OCI-LY7 (cell line): ENCODE measurements at regions of chr9 and their contacts with region 1.

Region 1: DNA sequence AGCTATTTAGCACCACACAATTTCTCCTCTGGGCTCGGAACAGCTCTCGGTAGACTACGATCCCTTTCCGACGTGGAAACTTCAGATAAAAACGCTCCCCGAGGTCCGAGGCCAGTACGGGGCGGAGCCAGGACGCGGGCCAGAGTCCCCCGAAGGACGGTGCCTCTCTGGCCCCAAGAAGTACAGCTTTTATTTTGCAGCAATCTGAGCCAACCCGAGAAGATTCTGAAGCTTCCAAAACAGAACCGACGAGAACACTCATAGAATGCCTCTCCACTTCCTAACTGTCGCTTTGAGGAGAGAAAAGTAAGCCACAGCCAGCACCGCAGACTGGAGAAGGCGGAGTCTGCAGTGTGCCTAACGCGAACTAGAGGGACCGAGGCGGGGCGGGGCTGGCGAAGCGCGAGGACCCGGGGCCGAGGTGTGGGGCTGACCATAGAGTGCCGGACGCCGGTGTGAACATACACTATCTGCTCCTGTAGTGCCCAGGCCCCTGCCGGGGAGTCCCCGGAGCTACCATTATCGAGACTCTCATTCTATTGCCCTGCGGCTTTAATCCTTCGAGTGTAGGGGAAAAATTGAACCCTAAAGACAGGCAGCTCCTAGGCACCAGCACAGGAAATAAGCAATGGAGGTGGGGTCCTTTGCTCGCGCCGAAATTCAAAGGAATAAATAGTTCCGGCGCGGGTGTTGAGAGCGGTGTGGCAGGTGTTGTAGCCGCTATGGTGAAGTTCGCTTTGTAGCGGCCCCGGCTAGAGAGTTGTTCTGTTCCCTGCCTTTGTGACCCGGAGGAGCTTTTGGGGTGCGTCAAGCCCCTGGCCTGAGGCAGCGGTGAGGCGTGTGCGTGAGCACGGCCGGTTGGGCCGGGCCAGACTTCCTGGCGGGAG is at the start of gene SMC2:
- DNase-seq: peak; percentile 93
- H3K4me3 ChIP-seq: peak within 1 kb of the TSS; percentile 85
- H3K27ac ChIP-seq: peak within 1 kb of the TSS; percentile 82
- H3K4me1 ChIP-seq: peaks cover 52% of the 10 kb centered on the region
- CTCF ChIP-seq: no peak
- total RNA-seq, gene SMC2: 56.4 and 76.6 TPM in 2 replicates

Region 2: DNA sequence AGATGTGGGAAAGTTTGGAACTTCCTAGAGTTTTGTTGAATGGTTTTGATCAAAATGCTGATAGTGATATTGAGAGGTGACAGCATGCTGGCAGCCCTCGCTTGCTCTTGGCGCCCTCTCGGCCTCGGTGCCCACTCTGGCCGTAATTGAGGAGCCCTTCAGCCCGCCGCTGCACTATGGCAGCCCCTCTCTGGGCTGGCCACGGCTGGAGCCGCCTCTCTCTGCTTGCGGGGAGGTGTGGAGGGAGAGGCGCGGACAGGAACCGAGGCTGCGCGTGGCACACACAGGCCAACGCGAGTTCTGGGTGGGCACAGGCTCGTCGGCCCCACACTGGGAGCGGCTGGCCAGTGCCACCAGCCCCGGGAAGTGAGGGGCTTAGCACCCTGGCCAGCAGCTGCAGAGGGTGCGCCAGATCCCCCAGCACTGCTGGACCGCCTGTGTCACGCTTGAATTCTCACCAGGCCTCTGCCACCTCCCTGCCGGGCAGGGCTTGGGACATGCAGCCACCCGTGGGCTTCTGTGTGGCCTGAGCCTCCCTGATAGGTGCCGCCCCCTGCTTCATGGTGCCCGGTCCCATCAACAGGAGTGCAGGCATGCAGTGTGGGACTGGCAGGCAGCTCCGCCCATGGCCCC is 610.3 kb before region 1 on chr9:
- CTCF ChIA-PET with region 1: no interaction called
- POLR2A ChIA-PET with region 1: no interaction called
- intact Hi-C with region 1: no loop called
- DNase-seq: no peak
- H3K4me3 ChIP-seq: no peak overlapping the region
- H3K27ac ChIP-seq: no peak overlapping the region
- H3K4me1 ChIP-seq: no peaks in the 10 kb centered on the region
- CTCF ChIP-seq: no peak

Region 3: DNA sequence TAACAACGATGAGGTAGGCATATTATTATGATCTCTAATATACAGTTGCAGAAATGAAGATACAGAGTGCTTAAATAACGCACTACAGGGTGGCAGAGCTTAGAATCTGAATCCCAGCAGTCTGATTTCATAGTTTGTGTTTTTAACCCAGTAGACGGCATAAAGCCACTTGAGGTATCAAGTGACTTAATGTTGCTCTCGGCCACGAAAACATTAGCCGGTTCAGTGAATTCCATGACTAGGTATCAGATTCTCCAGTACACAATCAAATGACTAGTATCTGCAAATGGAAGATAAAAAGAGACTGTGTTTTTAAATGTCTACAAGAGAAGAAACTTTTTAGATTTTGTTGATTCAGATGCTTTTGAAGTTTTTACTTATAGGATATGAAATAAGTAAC is 25.0 kb after region 1 on chr9:
- CTCF ChIA-PET with region 1: no interaction called
- POLR2A ChIA-PET with region 1: interaction called, 12 read pairs
- intact Hi-C with region 1: no loop called
- DNase-seq: no peak
- H3K4me3 ChIP-seq: no peak overlapping the region
- H3K27ac ChIP-seq: no peak overlapping the region
- H3K4me1 ChIP-seq: no peaks in the 10 kb centered on the region
- CTCF ChIP-seq: no peak